Breast epithelium (tissue), 4 donors: ENCODE measurements at regions of chr11 and their contacts with region 1.

Region 1: DNA sequence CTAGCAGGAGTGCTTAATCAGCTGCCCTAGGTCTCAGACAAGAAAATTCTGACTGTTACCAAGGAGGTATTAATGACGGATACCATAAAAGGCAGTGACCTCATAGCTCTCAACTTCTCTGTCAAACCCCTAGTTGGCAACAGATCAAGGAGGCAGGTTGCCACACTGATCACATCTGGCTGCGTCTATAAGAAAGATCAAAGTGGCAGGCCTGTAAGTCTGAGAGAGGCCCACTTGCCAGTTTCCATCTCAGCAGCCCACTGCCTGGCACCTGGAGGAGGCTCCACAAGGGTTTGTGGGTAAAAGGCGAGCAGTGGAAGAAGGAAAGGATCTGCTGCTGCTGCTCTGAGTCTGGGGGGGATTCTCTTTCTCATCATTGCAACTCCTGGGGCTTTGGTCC is 239.6 kb upstream of the MPPED2 start:
- DNase-seq: no peak
- H3K4me3 ChIP-seq: no peak overlapping the region
- H3K27ac ChIP-seq: no peak overlapping the region
- H3K4me1 ChIP-seq: peaks cover 0 to 8% of the 10 kb centered on the region in 2 donors
- H3K27me3 ChIP-seq: no peaks in the 10 kb centered on the region
- CTCF ChIP-seq: no peak
- POLR2A ChIP-seq: no peak

Region 2: GRCh38 chr11:32411942-32412615 is 1586.4 kb after region 1 on chr11:
- intact Hi-C with region 1: loop called (anchors 5 kb)
- DNase-seq: no peak
- H3K4me3 ChIP-seq: no peak overlapping the region
- H3K27ac ChIP-seq: no peak overlapping the region
- H3K4me1 ChIP-seq: no peaks in the 10 kb centered on the region
- H3K27me3 ChIP-seq: peaks cover 0 to 15% of the 10 kb centered on the region in 2 donors
- CTCF ChIP-seq: no peak
- POLR2A ChIP-seq: no peak